Dorsolateral prefrontal cortex (tissue), 120 donors: ENCODE measurements at regions of chr7 and their contacts with region 1.

Region 1: DNA sequence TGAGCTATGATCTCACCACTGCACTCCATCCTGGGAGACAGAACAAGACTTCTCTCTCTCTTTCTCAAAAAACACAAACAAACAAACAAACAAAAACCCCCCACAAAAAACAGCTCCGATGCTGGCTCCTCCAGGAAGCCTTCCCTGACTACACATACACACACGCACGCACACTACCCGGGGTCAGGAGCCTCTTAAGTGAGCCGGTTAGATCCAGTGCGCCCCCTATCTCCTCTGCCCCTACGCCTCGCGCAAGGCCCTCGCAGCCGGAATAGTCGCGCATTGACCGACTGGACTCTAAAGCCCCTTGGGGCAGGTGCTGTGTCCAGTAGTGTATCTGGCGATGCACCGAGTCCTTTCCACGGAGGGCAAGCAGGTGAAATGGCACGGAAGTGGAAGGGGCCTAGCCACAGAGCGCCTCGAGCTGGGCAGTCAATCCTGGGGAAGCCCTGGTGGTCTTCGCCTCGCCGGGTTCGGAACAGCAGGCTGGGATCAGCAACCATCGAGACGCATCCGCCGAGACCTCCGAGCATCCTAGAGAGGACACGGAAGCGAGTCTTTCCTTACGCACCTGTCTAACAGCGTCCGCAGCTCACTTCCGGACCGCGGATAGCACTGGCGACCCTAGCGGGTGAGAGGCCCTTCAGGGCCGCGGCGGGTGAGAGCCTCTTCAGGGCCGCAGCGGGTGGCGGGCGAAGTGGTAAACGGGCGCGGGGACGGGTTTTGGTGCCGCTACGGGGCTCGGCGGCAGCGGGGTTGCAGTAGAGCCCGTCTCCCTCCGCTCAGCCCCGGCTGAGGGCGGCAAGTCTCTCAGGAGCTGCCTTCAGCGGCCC is at the start of gene ZSCAN25:
- DNase-seq: peak; percentile 75 to 92 (median 89)
- H3K4me3 ChIP-seq: peak within 1 kb of the TSS; percentile 70 to 100 (median 98)
- H3K27ac ChIP-seq: peak within 1 kb of the TSS in 57 of 59 donors; percentile 33 to 95 (median 80)
- H3K27me3 ChIP-seq: no peaks in the 10 kb centered on the region
- CTCF ChIP-seq: peak in 46 of 56 donors; percentile 14 to 61 (median 36)
- total RNA-seq, gene ZSCAN25: 14.8 to 38.1 (median 24.2) TPM

Region 2: DNA sequence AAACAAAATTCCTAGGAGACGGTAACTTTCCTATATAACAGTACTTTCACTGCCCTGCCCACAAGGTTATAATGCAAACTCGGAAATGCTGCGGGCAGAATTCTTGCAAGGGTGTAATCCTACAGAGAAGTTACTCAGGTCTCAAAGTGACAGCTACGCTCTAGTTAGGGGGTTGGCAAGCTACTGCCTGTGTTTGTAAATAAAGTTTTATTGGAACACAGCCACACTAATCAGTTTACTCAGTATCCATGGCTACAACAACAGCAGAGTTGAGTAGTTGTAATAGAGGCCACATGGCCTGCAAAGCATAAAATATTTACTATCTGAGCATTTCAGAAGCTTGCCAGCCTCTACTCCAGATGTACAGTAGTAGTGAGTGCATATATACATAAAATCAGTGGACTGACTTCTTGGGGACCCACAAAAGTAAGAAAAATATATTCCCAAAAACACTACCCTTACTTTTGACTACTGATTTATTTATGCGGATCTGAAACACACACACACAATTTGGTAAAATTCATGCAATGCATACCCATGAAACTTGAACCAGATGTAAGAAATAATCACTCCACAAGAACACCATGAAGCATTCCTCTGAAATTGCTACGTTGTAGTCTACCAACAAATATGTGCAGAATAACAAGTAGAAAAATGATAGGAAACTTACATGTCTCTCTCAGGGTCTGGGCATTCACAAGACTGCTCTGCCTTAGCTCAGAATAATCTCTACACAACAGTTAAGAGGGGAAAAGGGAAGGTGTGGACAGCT is 525.6 kb before region 1 on chr7:
- intact Hi-C with region 1: no loop called
- DNase-seq: no peak
- H3K4me3 ChIP-seq: no peak overlapping the region
- H3K27ac ChIP-seq: peak overlapping the region in 31 of 59 donors; percentile 3 to 86 (median 74)
- H3K27me3 ChIP-seq: no peaks in the 10 kb centered on the region
- CTCF ChIP-seq: no peak

Region 3: GRCh38 chr7:99558306-99559174 is 58.0 kb before region 1 on chr7 and contains the start of gene ZNF655:
- intact Hi-C with region 1: loop called (anchors 2 to 5 kb)
- DNase-seq: peak; percentile 77 to 93 (median 87)
- H3K4me3 ChIP-seq: peak within 1 kb of the TSS; percentile 65 to 100 (median 96)
- H3K27ac ChIP-seq: peak within 1 kb of the TSS; percentile 86 to 99 (median 97)
- H3K27me3 ChIP-seq: no peaks in the 10 kb centered on the region
- CTCF ChIP-seq: peak in 19 of 56 donors; percentile 5 to 41 (median 16)
- total RNA-seq, gene ZNF655: 60.1 to 125 (median 87.8) TPM